ENCODE measurements at regions of chr13 and their contacts with region 1.

Region 1: DNA sequence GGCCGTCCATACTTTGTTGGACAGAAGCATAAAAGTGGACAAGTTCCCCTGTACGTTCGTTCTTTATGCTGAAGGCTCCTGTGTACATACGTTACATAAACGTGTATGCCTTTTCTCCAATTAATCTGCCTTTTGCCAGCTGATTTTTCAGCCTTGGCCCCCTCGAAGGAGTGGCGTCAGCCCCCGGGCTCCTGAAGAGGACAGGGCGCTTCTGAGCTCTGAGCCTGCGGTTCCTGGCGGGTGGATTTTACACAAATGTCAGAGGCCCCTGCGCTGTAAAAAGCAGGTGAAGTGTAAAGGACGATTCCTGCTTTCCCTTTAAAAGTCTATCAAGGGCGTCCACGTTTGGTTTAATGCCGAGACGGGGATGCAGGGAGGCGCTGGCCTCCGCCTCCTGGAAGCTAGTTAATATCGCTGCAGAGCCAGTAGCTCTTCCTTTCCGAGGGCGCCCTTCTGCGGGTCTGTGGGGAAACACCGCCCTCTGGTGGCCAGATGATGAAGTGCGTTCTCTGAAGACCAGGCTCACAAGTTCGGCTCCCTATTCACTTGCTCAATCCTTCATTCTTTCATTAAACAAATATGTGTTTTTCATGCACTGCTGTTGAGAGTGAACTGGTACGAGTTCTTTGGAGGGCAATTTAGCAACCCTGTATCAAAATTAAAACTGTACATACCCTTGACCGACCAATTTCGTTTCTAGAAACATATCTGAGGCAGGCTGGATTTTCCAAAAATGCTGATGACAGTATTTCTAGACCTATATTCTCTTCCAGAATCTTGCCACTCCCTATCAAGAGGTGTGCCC is 62.0 kb downstream of the GPR12 start:
- DNase-seq: peak; percentile 57
- ATAC-seq: peak; percentile 91
- H3K4me3 ChIP-seq: peak overlapping the region; percentile 21 to 43
- H3K27ac ChIP-seq: no peak overlapping the region
- H3K4me1 ChIP-seq: peaks cover 3% of the 10 kb centered on the region; the same call in 1 of the 2 replicates
- H3K27me3 ChIP-seq: no peaks in the 10 kb centered on the region
- CTCF ChIP-seq: peak; percentile 90

Region 2: DNA sequence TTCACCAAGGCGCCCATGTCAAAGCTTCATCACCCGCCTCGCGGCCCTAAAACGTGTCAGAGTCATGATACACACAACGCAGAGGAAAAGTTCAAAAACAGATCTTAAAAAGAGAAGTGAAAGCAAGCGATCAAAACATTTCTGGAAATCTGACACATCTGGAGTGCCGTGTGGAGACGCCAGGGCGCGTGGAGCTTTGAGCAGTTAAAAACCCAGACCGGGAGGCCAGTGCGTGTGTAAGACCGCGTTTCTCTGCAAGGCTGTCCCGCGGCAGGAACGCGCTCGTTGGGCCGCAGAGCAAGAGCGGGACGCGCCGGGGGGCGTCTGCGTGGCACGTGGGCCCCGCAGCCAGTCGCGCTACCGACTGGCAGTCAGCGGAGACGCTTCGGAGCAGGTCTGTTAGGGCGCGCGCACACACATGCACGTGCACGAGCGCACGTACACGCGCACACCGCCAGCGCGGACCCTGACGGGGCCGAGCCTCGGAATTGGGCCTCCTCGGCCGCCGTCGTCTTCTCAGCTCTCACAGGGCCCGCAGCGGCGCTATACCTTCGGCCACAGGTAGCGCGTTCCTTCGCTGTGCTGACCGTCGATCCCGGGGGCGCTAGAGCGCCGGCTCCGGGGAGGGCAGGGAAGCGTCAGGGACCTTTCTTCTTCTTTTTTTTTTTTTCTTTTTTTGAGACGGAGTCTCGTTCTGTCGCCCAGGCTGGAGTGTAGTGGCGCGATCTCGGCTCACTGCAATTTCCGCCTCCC is 512.3 kb before region 1 on chr13:
- CTCF ChIA-PET with region 1: interaction called, 23 read pairs
- POLR2A ChIA-PET with region 1: no interaction called
- in situ Hi-C with region 1: no loop called
- intact Hi-C with region 1: loop called (anchors 5 kb)
- DNase-seq: peak; percentile 43
- ATAC-seq: peak; percentile 96
- H3K4me3 ChIP-seq: peak overlapping the region; percentile 62 to 70
- H3K27ac ChIP-seq: peak overlapping the region; percentile 63
- H3K4me1 ChIP-seq: no peaks in the 10 kb centered on the region
- H3K27me3 ChIP-seq: no peaks in the 10 kb centered on the region
- CTCF ChIP-seq: peak; percentile 78

Region 3: DNA sequence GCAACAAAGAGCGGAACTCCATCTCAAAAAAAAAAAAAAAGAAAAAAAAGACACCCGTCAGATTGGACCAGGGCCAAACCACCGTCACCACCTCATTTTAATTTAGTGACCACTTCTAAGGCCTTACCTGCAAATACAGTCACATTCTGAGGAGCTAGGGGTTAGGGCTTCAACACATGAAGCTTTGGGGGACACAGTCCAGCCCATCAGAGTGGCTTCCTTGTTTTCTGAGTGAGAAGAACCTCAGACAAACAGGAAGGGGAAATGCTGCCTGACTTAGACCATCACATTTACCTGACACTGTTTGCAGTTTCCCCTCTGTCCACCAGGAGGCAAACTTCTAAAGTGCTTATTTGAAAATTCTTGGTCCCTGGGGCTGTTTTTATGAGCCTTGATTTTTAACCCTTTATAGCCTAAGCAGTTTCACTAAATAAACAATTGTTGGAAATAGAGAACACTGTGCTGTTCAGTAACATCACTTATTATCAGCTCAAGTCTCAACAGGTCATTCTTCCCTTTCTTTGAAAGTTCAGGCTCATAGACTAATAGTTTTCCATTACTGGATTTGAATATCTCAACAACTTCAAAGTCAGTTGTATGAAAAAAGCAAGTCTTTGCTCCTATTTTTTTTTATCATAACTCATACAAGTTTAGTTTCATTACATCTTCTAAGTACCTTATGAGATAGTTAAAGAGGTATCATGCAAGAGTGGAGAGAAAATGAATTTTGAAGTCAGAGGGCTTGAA is 216.0 kb before region 1 on chr13:
- CTCF ChIA-PET with region 1: interaction called, 6 read pairs
- POLR2A ChIA-PET with region 1: no interaction called
- in situ Hi-C with region 1: no loop called
- intact Hi-C with region 1: loop called (anchors 5 kb)
- DNase-seq: peak; percentile 51
- ATAC-seq: peak; percentile 56; the same call in 1 of the 2 replicates
- H3K4me3 ChIP-seq: peak overlapping the region in 1 of 2 experiments; percentile 28; a peak in 1 of 4 replicates
- H3K27ac ChIP-seq: no peak overlapping the region
- H3K4me1 ChIP-seq: no peaks in the 10 kb centered on the region
- H3K27me3 ChIP-seq: no peaks in the 10 kb centered on the region
- CTCF ChIP-seq: peak; percentile 79

Region 4: GRCh38 chr13:26498656-26499591 is 199.7 kb before region 1 on chr13:
- CTCF ChIA-PET with region 1: interaction called, 14 read pairs
- POLR2A ChIA-PET with region 1: no interaction called
- in situ Hi-C with region 1: no loop called
- intact Hi-C with region 1: loop called (anchors 5 kb)
- DNase-seq: no peak
- ATAC-seq: no peak
- H3K4me3 ChIP-seq: no peak overlapping the region
- H3K27ac ChIP-seq: no peak overlapping the region
- H3K4me1 ChIP-seq: no peaks in the 10 kb centered on the region
- H3K27me3 ChIP-seq: no peaks in the 10 kb centered on the region
- CTCF ChIP-seq: peak; percentile 20; the same call in 1 of the 2 replicates

Region 5: DNA sequence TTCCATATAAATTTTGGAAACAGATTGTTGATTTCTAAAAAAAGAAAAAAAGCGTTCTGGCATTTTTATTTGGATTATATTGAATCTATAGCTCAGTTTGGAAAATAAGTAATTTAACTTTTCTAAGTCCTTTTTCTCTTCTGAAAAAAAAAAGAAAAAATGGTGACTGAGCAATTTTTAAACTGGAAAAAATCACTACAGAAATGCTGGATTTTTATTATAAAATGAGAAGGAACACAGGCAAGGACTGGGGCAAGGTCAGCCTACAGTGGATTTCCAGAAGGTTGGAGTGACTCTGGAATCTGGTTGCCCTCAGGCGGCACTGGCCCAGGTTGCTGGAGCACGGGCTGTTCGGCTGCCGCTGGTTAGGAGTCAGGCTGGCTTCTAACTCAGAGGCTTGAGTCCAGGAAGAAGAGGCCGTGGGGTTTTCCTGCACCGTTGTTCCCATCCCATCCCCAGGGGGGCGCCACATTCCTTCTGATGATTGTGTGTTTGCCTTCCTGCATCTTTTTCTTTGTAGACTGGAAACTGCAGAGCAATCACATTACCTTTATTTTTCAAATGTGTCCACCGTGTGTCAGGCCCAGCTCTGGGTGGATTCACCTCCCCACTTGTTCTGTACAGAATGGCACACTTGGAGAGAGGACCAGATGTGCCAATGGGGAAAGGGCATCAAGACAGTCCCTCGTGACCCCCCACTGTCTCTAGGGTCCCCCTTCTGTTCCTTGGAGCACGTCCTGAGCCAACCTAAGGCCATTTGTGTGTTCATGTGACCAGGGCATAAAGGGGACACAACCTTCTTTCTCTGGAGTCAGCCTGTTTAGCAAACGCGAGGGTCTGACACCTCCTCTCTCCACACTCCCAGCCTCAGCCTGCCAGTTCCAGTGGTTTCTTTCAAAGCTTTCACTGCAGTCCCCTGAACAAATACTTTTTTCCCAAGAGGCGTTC is 681.4 kb after region 1 on chr13:
- CTCF ChIA-PET with region 1: no interaction called
- POLR2A ChIA-PET with region 1: no interaction called
- in situ Hi-C with region 1: no loop called
- intact Hi-C with region 1: no loop called
- DNase-seq: no peak
- ATAC-seq: peak; percentile 77
- H3K4me3 ChIP-seq: no peak overlapping the region
- H3K27ac ChIP-seq: no peak overlapping the region
- H3K4me1 ChIP-seq: no peaks in the 10 kb centered on the region; the same call in 1 of the 2 replicates
- H3K27me3 ChIP-seq: no peaks in the 10 kb centered on the region
- CTCF ChIP-seq: peak; percentile 80